ENCODE measurements at regions of chr1 and their contacts with region 1.

Region 1: DNA sequence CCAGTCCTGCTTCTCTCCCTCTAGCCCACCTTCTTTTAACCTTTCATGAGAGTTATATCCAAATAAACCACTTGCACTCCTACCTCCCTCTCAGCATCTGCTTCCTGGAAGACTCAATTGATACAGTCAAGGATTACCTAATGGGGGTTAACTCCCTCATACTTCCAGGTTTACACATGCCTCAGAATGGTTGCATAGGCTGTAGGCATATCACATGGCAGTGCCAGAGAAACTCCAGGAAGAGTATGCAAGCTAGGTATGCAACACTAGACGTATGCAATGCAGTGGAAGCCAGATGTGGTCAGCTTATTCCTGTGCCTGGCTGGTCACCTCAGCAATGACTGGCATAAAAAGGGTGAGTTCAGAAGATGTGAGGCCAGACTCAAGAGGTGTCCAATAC is 32.7 kb upstream of the VANGL1 start:
- DNase-seq: no peak
- H3K4me3 Mint-ChIP-seq: no peak overlapping the region
- H3K27ac Mint-ChIP-seq: no peak overlapping the region
- H3K4me1 Mint-ChIP-seq: no peaks in the 10 kb centered on the region
- H3K27me3 Mint-ChIP-seq: peaks cover 21% of the 10 kb centered on the region

Region 2: DNA sequence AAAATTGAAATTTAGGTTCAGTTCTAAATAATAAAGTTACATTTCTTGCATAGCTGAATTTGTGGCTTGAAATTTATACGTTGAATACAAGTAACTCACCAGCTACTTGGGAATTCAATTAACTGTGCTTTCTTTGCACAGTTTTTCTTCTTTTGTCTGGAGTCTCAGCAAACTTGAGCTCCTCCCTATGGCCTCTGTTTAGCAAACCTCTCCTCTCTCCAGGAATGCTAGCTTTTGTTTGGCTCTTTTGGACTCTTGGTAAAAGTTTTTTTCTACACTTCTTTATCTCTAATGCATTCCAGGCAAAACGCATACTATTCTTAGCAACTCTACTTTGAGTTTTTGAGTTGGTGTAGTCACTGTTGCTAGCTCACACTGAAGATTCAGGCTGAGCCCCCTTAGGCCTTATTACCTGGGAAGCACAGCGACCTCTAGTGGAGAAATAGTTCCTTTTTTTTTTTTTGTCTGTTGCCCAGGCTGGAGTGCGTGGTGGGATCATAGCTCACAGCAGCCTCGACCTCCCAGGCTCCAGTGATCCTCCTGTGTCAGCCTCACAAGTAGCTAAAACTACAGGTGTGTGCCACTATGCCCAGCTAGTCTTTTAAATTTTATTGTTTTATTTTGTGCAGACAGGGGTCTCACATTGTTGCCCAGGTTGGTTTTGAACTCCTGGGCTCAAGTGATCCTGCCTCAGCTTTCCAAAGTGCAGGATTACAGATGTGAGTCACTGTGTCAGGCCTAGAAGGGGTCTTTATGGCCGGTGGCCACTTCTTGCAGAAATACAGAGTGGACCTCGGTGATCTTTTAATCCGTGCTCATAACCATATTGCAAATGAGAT is 97.8 kb after region 1 on chr1:
- CTCF ChIA-PET with region 1: interaction called, 74 read pairs
- DNase-seq: no peak
- H3K4me3 Mint-ChIP-seq: no peak overlapping the region
- H3K27ac Mint-ChIP-seq: no peak overlapping the region
- H3K4me1 Mint-ChIP-seq: no peaks in the 10 kb centered on the region
- H3K27me3 Mint-ChIP-seq: peaks cover 21% of the 10 kb centered on the region

Region 3: DNA sequence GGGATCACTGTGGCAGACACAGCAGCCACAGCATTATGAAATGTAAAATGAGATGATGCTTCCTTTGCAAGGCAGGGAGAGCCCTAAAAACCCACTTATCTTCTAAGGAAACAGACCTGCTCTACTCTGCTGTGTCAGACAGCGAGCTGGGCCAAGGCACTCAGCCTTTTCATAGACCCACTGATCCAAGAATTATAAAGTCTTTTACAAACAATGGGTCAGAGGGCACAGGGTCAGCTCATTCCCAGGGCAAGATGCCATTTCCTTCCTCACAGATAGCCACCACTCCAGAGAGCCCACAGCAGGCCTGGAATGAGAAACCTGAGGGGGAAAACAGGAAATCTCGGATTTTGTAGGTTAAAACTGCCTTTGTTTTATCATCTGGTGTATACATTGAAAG is 116.6 kb after region 1 on chr1:
- CTCF ChIA-PET with region 1: no interaction called
- DNase-seq: no peak
- H3K4me3 Mint-ChIP-seq: no peak overlapping the region
- H3K27ac Mint-ChIP-seq: no peak overlapping the region
- H3K4me1 Mint-ChIP-seq: no peaks in the 10 kb centered on the region
- H3K27me3 Mint-ChIP-seq: peaks cover 8% of the 10 kb centered on the region

Region 4: DNA sequence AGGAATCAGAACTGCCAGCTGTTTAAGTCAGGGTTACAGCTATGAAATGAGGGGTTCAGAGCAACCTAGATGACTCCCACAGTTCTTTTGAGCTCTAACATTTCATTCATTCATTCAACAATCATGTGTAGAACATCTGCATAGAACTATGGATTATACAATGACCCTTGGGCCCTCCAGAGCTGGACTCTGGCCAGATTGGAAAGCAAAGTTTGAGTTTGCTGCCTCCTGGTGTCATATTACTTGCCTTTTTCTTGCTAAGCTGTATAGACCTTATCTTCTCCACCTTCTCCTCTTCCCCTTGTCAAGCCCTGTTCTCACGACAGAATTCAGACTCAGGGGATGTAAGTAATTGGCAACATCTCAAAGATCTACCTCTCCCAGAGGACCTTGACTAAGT is 155.5 kb after region 1 on chr1:
- CTCF ChIA-PET with region 1: interaction called, 13 read pairs
- DNase-seq: no peak
- H3K4me3 Mint-ChIP-seq: no peak overlapping the region
- H3K27ac Mint-ChIP-seq: no peak overlapping the region
- H3K4me1 Mint-ChIP-seq: no peaks in the 10 kb centered on the region
- H3K27me3 Mint-ChIP-seq: peaks cover 12% of the 10 kb centered on the region

Region 5: DNA sequence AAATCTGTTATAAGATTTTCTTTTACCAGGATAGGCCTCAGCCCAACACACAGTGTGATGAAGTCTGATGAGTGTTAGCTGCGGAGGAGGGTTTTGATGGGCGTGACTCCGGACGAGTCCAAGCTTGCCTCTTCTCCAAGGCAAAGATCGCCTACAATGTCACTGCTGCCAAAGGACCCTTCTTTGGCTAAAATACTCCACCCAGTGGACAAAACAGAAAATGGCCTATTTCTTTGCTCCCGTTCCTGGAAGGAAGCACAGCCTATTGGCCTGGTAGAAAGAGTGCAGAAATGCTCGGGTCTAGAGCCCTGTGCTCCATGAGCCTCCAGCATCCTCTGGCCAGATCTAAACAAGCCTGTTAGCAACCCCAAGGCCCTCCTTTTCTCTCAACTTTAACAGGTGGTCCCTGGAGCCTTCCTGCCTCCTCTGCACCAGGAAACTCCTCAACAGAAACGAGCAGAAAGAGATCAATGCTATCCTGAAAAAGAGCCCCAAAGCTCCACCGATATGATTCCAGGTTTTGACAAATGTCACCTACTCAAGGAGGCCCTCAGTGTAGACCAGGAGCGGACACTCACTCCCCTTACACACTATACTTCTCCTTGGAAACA is 162.9 kb after region 1 on chr1:
- CTCF ChIA-PET with region 1: interaction called, 14 read pairs
- DNase-seq: peak; percentile 26
- H3K4me3 Mint-ChIP-seq: no peak overlapping the region
- H3K27ac Mint-ChIP-seq: no peak overlapping the region
- H3K4me1 Mint-ChIP-seq: no peaks in the 10 kb centered on the region
- H3K27me3 Mint-ChIP-seq: peaks cover 19% of the 10 kb centered on the region